Panc1 (cell line): ENCODE measurements at regions of chr3 and their contacts with region 1.

Region 1: GRCh38 chr3:100260685-100261484 is at the start of gene TBC1D23:
- DNase-seq: peak; percentile 98
- ATAC-seq: peak; percentile 100
- H3K4me3 ChIP-seq: peak within 1 kb of the TSS; percentile 97 to 100
- H3K27ac ChIP-seq: peak within 1 kb of the TSS; percentile 96
- H3K4me1 ChIP-seq: peaks cover 28% of the 10 kb centered on the region
- H3K27me3 ChIP-seq: no peaks in the 10 kb centered on the region
- CTCF ChIP-seq: no peak
- total RNA-seq, gene TBC1D23: 39.4 TPM

Region 2: GRCh38 chr3:99817437-99818240 is 443.2 kb before region 1 on chr3 and contains the start of gene CMSS1:
- CTCF ChIA-PET with region 1: interaction called, 10 read pairs
- POLR2A ChIA-PET with region 1: interaction called, 3 read pairs
- in situ Hi-C with region 1: no loop called
- intact Hi-C with region 1: no loop called
- DNase-seq: peak; percentile 86
- ATAC-seq: peak; percentile 99
- H3K4me3 ChIP-seq: peak within 1 kb of the TSS; percentile 80 to 89
- H3K27ac ChIP-seq: peak within 1 kb of the TSS; percentile 94
- H3K4me1 ChIP-seq: peaks cover 8% of the 10 kb centered on the region; the same call in 1 of the 2 replicates
- H3K27me3 ChIP-seq: no peaks in the 10 kb centered on the region; the same call in 1 of the 2 replicates
- CTCF ChIP-seq: no peak
- total RNA-seq, gene CMSS1: 86.3 TPM

Region 3: GRCh38 chr3:99833617-99834205 is 427.2 kb before region 1 on chr3:
- CTCF ChIA-PET with region 1: interaction called, 9 read pairs
- POLR2A ChIA-PET with region 1: interaction called, 8 read pairs
- in situ Hi-C with region 1: no loop called
- intact Hi-C with region 1: loop called (anchors 2 kb)
- DNase-seq: no peak
- ATAC-seq: no peak
- H3K4me3 ChIP-seq: no peak overlapping the region
- H3K27ac ChIP-seq: no peak overlapping the region; the same call in 1 of the 2 replicates
- H3K4me1 ChIP-seq: no peaks in the 10 kb centered on the region
- H3K27me3 ChIP-seq: no peaks in the 10 kb centered on the region
- CTCF ChIP-seq: no peak

Region 4: DNA sequence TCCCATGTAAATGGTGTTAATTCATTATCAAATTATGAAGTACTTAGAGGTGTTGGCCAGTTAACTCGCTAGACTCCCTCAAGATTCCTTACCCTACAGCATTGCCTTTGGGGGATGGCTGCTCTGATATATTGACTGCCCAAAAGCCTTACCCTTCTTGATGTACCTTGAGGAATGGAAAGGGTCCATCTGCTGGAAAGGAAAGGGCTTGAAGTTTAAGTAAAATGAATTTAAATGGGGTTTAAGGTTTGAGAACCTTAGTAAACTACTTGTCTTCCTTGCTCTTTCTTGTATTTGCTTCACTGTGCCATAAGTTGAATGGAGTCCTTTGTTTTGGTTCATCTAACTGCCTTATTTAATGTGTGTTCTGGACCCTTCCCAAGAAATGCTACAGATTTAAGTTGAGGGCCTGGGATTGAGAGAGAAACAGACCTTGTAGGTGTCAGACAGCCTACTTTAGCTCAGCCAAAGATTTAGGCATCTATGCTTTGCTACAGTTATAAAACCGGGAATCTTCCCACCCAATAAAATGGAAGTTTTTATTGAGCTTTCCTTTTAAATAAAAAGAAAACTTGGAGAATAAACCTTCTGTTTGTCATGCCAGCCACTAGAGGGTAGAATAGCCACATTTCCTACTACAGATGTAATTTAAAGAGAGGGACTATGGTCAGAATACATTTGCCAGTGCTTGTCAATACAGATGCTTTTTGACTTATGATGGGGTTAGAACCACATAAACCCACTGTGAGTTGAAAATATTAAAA is 417.9 kb before region 1 on chr3:
- CTCF ChIA-PET with region 1: interaction called, 4 read pairs
- POLR2A ChIA-PET with region 1: interaction called, 19 read pairs
- in situ Hi-C with region 1: no loop called
- intact Hi-C with region 1: no loop called
- DNase-seq: no peak
- ATAC-seq: peak; percentile 87
- H3K4me3 ChIP-seq: no peak overlapping the region
- H3K27ac ChIP-seq: peak overlapping the region; percentile 64
- H3K4me1 ChIP-seq: peaks cover 16% of the 10 kb centered on the region
- H3K27me3 ChIP-seq: no peaks in the 10 kb centered on the region
- CTCF ChIP-seq: peak; percentile 79

Region 5: GRCh38 chr3:100041328-100041749 is 219.5 kb before region 1 on chr3:
- CTCF ChIA-PET with region 1: no interaction called
- POLR2A ChIA-PET with region 1: interaction called, 15 read pairs
- in situ Hi-C with region 1: no loop called
- intact Hi-C with region 1: no loop called
- DNase-seq: peak; percentile 95
- ATAC-seq: peak; percentile 55
- H3K4me3 ChIP-seq: no peak overlapping the region
- H3K27ac ChIP-seq: peak overlapping the region; percentile 74
- H3K4me1 ChIP-seq: peaks cover 37% of the 10 kb centered on the region
- H3K27me3 ChIP-seq: no peaks in the 10 kb centered on the region
- CTCF ChIP-seq: no peak

Region 6: GRCh38 chr3:100245927-100246326 is 15.0 kb before region 1 on chr3:
- CTCF ChIA-PET with region 1: no interaction called
- POLR2A ChIA-PET with region 1: no interaction called
- in situ Hi-C with region 1: no loop called
- intact Hi-C with region 1: no loop called
- DNase-seq: no peak
- ATAC-seq: no peak
- H3K4me3 ChIP-seq: no peak overlapping the region
- H3K27ac ChIP-seq: no peak overlapping the region
- H3K4me1 ChIP-seq: no peaks in the 10 kb centered on the region
- H3K27me3 ChIP-seq: no peaks in the 10 kb centered on the region
- CTCF ChIP-seq: no peak